ENCODE measurements at regions of chr10 and their contacts with region 1.

Region 1: GRCh38 chr10:50540069-50540825 is 83.5 kb downstream of the SGMS1 start:
- DNase-seq: peak; percentile 70
- H3K4me3 Mint-ChIP-seq: peak overlapping the region; percentile 57
- H3K27ac Mint-ChIP-seq: peak overlapping the region; percentile 89
- H3K4me1 Mint-ChIP-seq: peaks cover 86% of the 10 kb centered on the region
- H3K27me3 Mint-ChIP-seq: no peaks in the 10 kb centered on the region

Region 2: GRCh38 chr10:50417886-50418830 is 122.1 kb before region 1 on chr10:
- CTCF ChIA-PET with region 1: no interaction called
- intact Hi-C with region 1: loop called (anchors 5 kb)
- DNase-seq: peak; percentile 58
- H3K4me3 Mint-ChIP-seq: peak overlapping the region; percentile 81
- H3K27ac Mint-ChIP-seq: no peak overlapping the region
- H3K4me1 Mint-ChIP-seq: peaks cover 23% of the 10 kb centered on the region
- H3K27me3 Mint-ChIP-seq: no peaks in the 10 kb centered on the region

Region 3: GRCh38 chr10:50508315-50509051 is 31.8 kb before region 1 on chr10:
- CTCF ChIA-PET with region 1: no interaction called
- intact Hi-C with region 1: loop called (anchors 1 kb)
- DNase-seq: peak; percentile 13
- H3K4me3 Mint-ChIP-seq: no peak overlapping the region
- H3K27ac Mint-ChIP-seq: no peak overlapping the region
- H3K4me1 Mint-ChIP-seq: peaks cover 49% of the 10 kb centered on the region
- H3K27me3 Mint-ChIP-seq: no peaks in the 10 kb centered on the region

Region 4: DNA sequence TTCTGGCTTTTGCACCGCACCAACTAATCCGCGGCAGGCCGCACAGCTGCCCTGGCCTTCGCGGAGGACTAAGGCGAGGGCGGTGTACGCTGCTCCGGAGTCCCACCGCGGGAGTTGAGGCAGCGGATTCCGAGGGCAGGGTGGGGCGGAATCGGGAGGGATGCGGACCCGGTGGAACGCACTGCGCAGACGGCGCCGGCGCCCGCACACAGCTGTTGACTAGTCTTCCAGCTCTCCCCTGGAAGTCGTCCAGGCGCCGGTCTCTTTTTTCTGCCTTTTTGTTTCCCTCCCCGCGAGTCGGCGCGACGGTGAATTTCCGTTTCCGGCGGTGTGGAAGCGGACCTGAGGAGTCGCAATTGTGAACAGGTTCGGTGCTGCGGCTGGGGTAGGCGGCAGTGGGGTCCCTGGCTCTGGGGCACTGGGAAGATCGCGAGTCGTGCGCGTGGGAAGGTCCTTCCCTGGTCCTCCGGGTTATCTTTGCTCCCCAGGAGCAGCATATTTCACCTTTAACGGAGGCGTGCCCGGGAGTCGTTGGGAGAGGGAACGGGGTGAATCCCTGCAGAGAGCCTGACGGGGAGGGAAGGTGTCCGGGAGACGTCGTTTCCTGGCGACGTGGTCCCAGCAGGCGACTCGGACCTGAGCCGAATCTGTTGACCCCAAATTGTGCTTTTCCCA is 199.5 kb after region 1 on chr10 and contains the start of gene ASAH2B:
- CTCF ChIA-PET with region 1: no interaction called
- intact Hi-C with region 1: loop called (anchors 5 kb)
- DNase-seq: peak; percentile 88
- H3K4me3 Mint-ChIP-seq: peak within 1 kb of the TSS; percentile 98
- H3K27ac Mint-ChIP-seq: peak within 1 kb of the TSS; percentile 95
- H3K4me1 Mint-ChIP-seq: peaks cover 16% of the 10 kb centered on the region
- H3K27me3 Mint-ChIP-seq: peaks cover 2% of the 10 kb centered on the region
- total RNA-seq, gene ASAH2B: 3.9 to 4.6 TPM

Region 5: GRCh38 chr10:51879238-51879637 is 1339.0 kb after region 1 on chr10:
- CTCF ChIA-PET with region 1: no interaction called
- intact Hi-C with region 1: loop called (anchors 2 kb)
- DNase-seq: peak; percentile 55
- H3K4me3 Mint-ChIP-seq: no peak overlapping the region
- H3K27ac Mint-ChIP-seq: no peak overlapping the region
- H3K4me1 Mint-ChIP-seq: peaks cover 18% of the 10 kb centered on the region
- H3K27me3 Mint-ChIP-seq: no peaks in the 10 kb centered on the region